T-cell (primary cell): ENCODE measurements at regions of chr21 and their contacts with region 1.

Region 1: GRCh38 chr21:15775981-15776380 is 46.2 kb downstream of the USP25 start:
- DNase-seq: no peak
- ATAC-seq: no peak
- H3K4me3 ChIP-seq: no peak overlapping the region
- H3K4me3 Mint-ChIP-seq: no peak overlapping the region
- H3K27ac ChIP-seq: no peak overlapping the region
- H3K27ac Mint-ChIP-seq: no peak overlapping the region
- H3K4me1 ChIP-seq: no peaks in the 10 kb centered on the region
- H3K4me1 Mint-ChIP-seq: peaks cover 44 to 61% (median 53%) of the 10 kb centered on the region in 3 donors
- H3K27me3 ChIP-seq: no peaks in the 10 kb centered on the region
- H3K27me3 Mint-ChIP-seq: no peaks in the 10 kb centered on the region

Region 2: GRCh38 chr21:15121655-15122120 is 654.3 kb before region 1 on chr21:
- CTCF ChIA-PET with region 1: no interaction called
- POLR2A ChIA-PET with region 1: no interaction called
- DNase-seq: no peak
- ATAC-seq: no peak
- H3K4me3 ChIP-seq: no peak overlapping the region
- H3K4me3 Mint-ChIP-seq: no peak overlapping the region
- H3K27ac ChIP-seq: no peak overlapping the region
- H3K27ac Mint-ChIP-seq: no peak overlapping the region
- H3K4me1 ChIP-seq: no peaks in the 10 kb centered on the region
- H3K4me1 Mint-ChIP-seq: no peaks in the 10 kb centered on the region
- H3K27me3 ChIP-seq: peaks cover 0 to 12% of the 10 kb centered on the region in 2 experiments
- H3K27me3 Mint-ChIP-seq: peaks cover 3 to 7% of the 10 kb centered on the region in 2 donors

Region 3: DNA sequence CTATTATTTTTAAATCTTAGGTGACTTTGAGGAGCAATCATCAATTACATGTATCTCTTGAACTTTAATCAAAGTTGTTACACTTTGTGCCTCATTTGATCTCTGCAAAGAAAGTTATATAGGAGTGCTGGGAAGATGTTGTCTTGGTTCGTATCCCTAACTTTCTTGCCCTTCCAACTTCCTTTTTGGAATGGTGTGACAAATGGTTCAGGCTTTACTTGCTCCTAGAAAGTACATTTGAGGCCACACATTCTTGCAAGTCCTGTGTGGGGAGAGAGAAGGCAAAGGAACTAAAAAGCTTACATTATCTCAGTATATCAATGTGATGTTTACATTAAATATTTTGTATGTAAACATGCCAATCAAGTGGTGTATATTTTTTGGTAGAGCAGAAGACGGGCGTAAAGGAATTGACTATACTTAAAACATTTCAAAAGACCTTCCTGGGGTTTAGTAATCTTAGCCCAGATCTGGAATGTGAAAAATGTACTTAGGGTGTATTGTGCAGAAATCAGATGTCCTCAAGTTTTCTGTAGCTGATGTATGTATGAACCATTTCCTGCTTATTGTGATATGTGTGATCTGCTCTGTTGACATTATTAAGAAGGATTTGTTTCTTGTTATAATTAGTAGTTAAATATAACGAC is 13.0 kb after region 1 on chr21:
- CTCF ChIA-PET with region 1: no interaction called
- POLR2A ChIA-PET with region 1: interaction called, 4 to 15 read pairs
- DNase-seq: no peak
- ATAC-seq: no peak
- H3K4me3 ChIP-seq: no peak overlapping the region
- H3K4me3 Mint-ChIP-seq: no peak overlapping the region
- H3K27ac ChIP-seq: no peak overlapping the region
- H3K27ac Mint-ChIP-seq: peak overlapping the region in 1 of 2 donors; percentile 6
- H3K4me1 ChIP-seq: peaks cover 0 to 5% of the 10 kb centered on the region in 2 experiments
- H3K4me1 Mint-ChIP-seq: peaks cover 42 to 59% (median 45%) of the 10 kb centered on the region in 3 donors
- H3K27me3 ChIP-seq: no peaks in the 10 kb centered on the region
- H3K27me3 Mint-ChIP-seq: no peaks in the 10 kb centered on the region